IMR-90 (cell line): ENCODE measurements at regions of chr1 and their contacts with region 1.

Region 1: DNA sequence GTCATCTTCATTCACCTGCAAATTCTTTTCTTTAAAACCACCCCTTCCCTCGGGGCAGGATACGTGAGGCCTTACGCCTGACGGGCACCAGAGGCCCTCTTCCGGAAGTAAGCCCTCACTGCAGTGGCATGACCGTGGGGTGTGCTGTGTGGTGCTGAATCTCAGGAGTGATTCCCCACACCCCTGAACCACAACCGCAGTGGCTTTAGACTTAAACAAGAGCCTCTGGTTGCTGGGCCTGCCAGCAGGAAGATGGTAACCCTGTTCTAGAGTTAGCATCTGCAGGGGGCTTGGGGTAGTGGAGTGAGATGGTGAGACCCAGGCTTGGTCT is 12.1 kb downstream of the BSND start:
- DNase-seq: no peak
- ATAC-seq: no peak
- H3K4me3 ChIP-seq: no peak overlapping the region
- H3K27ac ChIP-seq: no peak overlapping the region
- H3K4me1 ChIP-seq: peaks cover 10% of the 10 kb centered on the region
- H3K27me3 ChIP-seq: peaks cover 38% of the 10 kb centered on the region
- CTCF ChIP-seq: no peak
- POLR2A ChIP-seq: no peak
- RAD21 ChIP-seq: no peak

Region 2: DNA sequence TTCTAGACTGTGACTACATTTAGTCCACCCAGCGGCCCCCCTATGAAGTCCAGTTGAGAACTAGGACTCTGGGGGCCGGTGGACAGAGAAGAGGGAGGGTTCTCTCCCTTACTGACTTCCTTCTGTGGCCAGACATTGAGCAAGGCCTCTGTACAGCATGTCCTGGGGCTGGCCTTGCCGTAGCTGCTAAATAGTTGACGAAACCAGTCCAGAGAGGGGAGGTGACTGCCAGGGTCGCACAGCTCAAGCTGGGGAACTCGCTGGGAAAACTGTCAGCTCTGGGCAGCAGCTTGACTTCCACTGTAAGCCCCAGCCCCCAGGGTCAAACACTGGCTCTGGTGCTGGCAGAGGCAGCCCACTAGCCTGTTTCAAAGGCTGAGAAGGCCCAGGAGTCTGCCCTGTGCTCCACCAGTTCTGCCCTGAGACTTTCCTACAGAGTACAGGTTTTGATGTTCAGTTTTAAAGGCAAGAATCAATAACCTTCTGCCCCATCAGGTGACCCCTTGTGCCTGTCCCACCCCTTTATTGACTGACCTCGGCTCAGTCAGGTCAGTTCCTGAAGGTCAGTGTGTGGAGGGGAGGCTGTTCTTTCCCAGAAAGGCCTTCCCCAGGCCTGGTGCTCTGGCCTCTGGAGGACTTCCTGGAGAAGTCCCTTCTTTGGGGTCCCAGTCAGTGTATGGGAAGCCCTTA is 42.6 kb after region 1 on chr1:
- CTCF ChIA-PET with region 1: no interaction called
- POLR2A ChIA-PET with region 1: no interaction called
- dilution Hi-C with region 1: no loop called
- in situ Hi-C with region 1: no loop called
- intact Hi-C with region 1: loop called (anchors 1 kb)
- DNase-seq: no peak
- ATAC-seq: no peak
- H3K4me3 ChIP-seq: no peak overlapping the region
- H3K27ac ChIP-seq: no peak overlapping the region
- H3K4me1 ChIP-seq: no peaks in the 10 kb centered on the region
- H3K27me3 ChIP-seq: peaks cover 23% of the 10 kb centered on the region
- CTCF ChIP-seq: no peak
- POLR2A ChIP-seq: no peak
- RAD21 ChIP-seq: no peak